Left colon (tissue), 2 donors: ENCODE measurements at regions of chr1 and their contacts with region 1.

Region 1: DNA sequence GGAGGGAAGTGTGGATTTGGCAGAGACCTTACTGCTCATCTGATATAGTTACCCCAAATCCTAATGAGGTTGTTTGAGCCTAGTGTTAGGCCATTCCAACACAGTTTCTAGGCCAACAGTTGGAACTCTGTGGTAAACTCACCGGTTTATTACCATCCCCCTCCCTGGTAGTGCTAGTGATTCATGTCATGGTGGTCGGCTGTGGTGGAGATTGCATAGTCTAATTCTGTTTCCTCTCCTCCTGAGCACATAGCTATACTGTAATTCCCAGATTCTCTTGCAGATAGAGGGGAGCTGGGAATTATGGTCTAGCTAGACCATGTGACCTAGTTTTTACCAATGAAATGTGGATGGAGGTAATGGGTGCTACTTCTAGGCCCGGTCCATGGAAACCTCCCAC is 123.7 kb upstream of the KIF26B start:
- DNase-seq: no peak
- ATAC-seq: no peak

Region 2: DNA sequence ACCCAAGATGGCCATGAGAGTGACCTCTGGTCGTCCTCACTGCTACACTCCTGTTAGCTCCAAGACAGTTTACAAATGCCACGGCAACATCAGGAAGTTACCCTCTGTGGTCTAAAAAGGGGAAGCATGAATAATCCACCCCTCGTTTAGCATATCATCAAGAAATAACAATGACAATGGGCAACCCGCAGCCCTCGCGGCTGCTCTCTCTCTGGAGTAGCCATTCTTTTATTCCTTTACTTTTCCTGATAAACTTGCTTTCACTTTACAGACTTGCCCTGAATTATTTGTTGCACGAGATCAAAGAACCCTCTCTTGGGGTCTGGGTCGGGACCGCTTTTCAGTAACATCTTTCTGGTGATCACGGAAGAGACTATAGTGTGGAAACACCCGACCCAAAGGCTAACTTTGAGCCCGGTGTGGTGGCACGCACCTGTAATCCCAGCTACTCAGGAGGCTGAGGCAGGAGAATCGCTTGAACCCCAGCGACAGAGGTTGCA is 215.4 kb before region 1 on chr1:
- intact Hi-C with region 1: loop called in 1 of 2 experiments (anchors 10 kb)
- DNase-seq: no peak
- ATAC-seq: no peak

Region 3: DNA sequence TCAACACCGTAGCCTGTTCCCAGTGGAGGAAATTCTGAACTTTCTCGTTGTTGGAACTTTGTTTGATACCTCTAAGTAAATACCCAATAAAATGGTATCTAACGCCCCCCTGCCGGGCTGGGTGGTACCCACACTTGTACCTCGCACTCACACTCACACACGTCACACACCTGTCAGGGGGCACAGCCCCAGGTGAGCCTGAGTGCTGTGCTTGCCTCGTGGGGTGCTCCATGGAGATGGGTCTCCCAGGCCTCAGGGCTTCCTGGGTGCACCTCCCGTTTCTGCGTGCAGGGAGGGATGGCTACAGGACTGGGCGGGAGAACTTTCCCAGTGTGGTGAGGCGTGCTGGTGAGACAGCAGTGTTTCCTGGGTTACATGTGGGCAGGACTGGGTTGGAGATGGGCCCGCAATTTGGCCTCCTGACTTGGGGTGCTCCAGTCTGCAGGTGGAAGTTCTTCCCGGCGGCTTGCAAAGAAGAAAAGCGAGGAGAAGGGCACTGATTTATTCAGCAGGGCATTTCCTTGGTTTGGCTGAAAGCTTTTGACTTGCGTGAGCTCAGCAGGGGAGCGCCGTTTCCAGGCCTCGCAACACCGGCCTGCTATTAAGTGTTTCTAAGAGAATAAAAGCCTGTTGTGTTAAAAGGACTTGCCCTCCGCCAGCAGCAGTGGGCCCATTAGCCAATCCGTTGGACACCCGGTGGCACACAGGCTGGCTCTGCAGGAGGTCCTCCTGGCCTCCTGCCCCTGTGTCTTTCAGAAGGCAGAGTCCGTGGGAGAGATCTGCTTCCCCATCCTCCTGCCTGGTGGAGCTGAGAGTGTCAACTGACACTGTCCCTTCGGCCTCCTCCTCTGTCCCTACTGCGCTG is 203.4 kb after region 1 on chr1:
- intact Hi-C with region 1: no loop called
- DNase-seq: no peak
- ATAC-seq: no peak